Activated B cell treated with CpG ODN at 0.5 μM for 24 hours (primary cell): ENCODE measurements at regions of chr19 and their contacts with region 1.

Region 1: GRCh38 chr19:11987405-11988281 is 22.8 kb downstream of the ZNF763 start:
- DNase-seq: peak; percentile 85
- ATAC-seq: peak; percentile 96
- H3K4me3 Mint-ChIP-seq: peak overlapping the region; percentile 99
- H3K27ac Mint-ChIP-seq: peak overlapping the region; percentile 97
- H3K4me1 Mint-ChIP-seq: peaks cover 31% of the 10 kb centered on the region
- H3K27me3 Mint-ChIP-seq: no peaks in the 10 kb centered on the region
- CTCF ChIP-seq: no peak

Region 2: GRCh38 chr19:11798391-11799330 is 189.0 kb before region 1 on chr19 and contains the start of gene ZNF491:
- CTCF ChIA-PET with region 1: interaction called, 26 read pairs
- POLR2A ChIA-PET with region 1: interaction called, 14 read pairs
- intact Hi-C with region 1: loop called (anchors 1 kb)
- DNase-seq: peak; percentile 77
- ATAC-seq: peak; percentile 99
- H3K4me3 Mint-ChIP-seq: peak within 1 kb of the TSS; percentile 91
- H3K27ac Mint-ChIP-seq: peak within 1 kb of the TSS; percentile 71
- H3K4me1 Mint-ChIP-seq: peaks cover 25% of the 10 kb centered on the region
- H3K27me3 Mint-ChIP-seq: no peaks in the 10 kb centered on the region
- CTCF ChIP-seq: no peak
- total RNA-seq, gene ZNF491: 1.4 and 1.7 TPM in 2 replicates

Region 3: DNA sequence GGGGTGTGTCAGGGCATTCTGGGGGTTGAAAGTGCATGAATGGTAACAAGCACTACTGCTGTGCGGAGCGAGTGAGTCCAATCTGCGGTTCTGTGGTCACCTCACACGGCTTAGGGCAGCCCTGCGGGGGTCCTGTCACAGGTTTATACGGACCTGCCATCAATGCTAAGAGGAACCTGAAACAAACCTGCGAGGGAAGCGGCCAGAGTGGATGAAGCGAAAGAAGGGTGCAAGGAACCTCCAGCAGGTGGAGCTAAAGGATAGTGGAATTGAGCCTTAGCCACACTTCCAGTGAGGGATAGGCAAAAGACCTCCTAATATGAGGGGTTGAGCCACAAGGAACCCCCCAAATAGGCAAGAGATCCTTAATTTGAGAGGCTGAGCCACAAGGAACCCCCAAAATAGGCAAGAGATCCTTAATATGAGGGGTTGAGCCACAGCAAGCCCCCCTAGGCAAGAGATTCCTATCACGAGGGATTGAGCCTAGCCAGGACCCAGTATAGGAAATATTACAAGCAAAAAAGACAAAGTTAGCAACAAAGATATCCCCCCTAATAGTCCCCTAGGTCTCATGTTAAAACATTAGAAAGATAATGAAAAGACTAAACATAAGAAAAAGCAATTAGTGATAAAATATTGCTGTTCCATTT is 106.4 kb before region 1 on chr19:
- CTCF ChIA-PET with region 1: interaction called, 3 read pairs
- POLR2A ChIA-PET with region 1: no interaction called
- intact Hi-C with region 1: loop called (anchors 1 kb)
- DNase-seq: peak; percentile 27
- ATAC-seq: peak; percentile 82
- H3K4me3 Mint-ChIP-seq: no peak overlapping the region
- H3K27ac Mint-ChIP-seq: no peak overlapping the region
- H3K4me1 Mint-ChIP-seq: peaks cover 2% of the 10 kb centered on the region
- H3K27me3 Mint-ChIP-seq: no peaks in the 10 kb centered on the region
- CTCF ChIP-seq: no peak

Region 4: GRCh38 chr19:11971041-11971440 is 16.6 kb before region 1 on chr19:
- CTCF ChIA-PET with region 1: interaction called, 14 read pairs
- POLR2A ChIA-PET with region 1: interaction called, 8 read pairs
- intact Hi-C with region 1: no loop called
- DNase-seq: no peak
- ATAC-seq: no peak
- H3K4me3 Mint-ChIP-seq: no peak overlapping the region
- H3K27ac Mint-ChIP-seq: no peak overlapping the region
- H3K4me1 Mint-ChIP-seq: peaks cover 4% of the 10 kb centered on the region
- H3K27me3 Mint-ChIP-seq: no peaks in the 10 kb centered on the region
- CTCF ChIP-seq: no peak

Region 5: DNA sequence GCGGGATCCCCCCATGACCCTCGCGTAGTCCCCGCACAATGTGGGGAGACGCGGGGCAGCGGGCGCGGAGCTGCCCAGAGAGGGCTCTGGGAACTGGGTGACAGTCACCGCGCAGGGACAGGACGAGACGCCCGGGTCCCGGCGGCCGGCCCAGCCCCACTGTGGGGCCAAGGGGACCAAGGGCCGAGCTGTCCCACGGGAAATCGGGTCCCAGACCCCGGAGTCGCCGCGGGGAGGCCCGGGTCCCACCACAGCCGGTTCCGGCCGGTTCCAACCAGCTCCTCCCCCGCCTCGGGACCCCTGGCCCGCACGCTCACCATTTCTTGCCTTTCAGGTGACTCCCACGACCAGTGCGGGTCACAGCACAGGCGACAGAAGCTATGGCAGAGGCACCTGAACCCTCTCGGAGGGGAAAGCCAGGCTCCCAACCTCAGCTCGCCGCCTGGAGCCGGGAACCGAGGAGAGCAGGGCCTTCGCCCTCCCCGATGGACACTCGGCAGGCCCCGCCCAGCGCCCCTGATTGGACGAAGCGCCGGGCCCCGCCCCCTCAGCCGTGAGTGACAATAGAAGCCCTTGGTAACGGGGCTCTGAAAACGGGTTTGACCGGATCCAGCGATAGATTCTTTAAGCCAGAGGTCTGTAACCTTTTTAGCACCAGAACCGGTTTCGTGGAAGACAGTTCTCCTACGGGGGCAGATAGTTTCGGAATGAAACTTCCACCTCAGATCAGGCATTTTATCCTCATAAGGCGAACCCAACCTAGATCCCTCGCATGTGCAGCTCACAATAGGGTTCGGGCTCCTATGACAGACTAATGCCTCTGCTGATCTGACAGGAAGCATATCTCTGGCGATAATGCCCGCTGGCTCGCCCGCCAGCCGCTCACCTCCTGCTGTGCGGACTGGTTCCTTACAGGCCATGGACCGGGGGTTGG is 47.8 kb after region 1 on chr19 and contains the start of gene ZNF433:
- CTCF ChIA-PET with region 1: no interaction called
- POLR2A ChIA-PET with region 1: interaction called, 6 read pairs
- intact Hi-C with region 1: loop called (anchors 5 kb)
- DNase-seq: peak; percentile 80
- ATAC-seq: peak; percentile 98
- H3K4me3 Mint-ChIP-seq: peak within 1 kb of the TSS; percentile 92
- H3K27ac Mint-ChIP-seq: peak within 1 kb of the TSS; percentile 74
- H3K4me1 Mint-ChIP-seq: peaks cover 20% of the 10 kb centered on the region
- H3K27me3 Mint-ChIP-seq: no peaks in the 10 kb centered on the region
- CTCF ChIP-seq: no peak
- total RNA-seq, gene ZNF433: 6.9 and 8.6 TPM in 2 replicates

Region 6: GRCh38 chr19:12064590-12065538 is 77.2 kb after region 1 on chr19 and contains the start of gene ZNF844:
- CTCF ChIA-PET with region 1: interaction called, 5 read pairs
- POLR2A ChIA-PET with region 1: interaction called, 12 read pairs
- intact Hi-C with region 1: no loop called
- DNase-seq: peak; percentile 81
- ATAC-seq: peak; percentile 95
- H3K4me3 Mint-ChIP-seq: peak within 1 kb of the TSS; percentile 92
- H3K27ac Mint-ChIP-seq: peak within 1 kb of the TSS; percentile 93
- H3K4me1 Mint-ChIP-seq: peaks cover 14% of the 10 kb centered on the region
- H3K27me3 Mint-ChIP-seq: no peaks in the 10 kb centered on the region
- CTCF ChIP-seq: no peak
- total RNA-seq, gene ZNF844: 24.8 and 27.7 TPM in 2 replicates

Region 7: DNA sequence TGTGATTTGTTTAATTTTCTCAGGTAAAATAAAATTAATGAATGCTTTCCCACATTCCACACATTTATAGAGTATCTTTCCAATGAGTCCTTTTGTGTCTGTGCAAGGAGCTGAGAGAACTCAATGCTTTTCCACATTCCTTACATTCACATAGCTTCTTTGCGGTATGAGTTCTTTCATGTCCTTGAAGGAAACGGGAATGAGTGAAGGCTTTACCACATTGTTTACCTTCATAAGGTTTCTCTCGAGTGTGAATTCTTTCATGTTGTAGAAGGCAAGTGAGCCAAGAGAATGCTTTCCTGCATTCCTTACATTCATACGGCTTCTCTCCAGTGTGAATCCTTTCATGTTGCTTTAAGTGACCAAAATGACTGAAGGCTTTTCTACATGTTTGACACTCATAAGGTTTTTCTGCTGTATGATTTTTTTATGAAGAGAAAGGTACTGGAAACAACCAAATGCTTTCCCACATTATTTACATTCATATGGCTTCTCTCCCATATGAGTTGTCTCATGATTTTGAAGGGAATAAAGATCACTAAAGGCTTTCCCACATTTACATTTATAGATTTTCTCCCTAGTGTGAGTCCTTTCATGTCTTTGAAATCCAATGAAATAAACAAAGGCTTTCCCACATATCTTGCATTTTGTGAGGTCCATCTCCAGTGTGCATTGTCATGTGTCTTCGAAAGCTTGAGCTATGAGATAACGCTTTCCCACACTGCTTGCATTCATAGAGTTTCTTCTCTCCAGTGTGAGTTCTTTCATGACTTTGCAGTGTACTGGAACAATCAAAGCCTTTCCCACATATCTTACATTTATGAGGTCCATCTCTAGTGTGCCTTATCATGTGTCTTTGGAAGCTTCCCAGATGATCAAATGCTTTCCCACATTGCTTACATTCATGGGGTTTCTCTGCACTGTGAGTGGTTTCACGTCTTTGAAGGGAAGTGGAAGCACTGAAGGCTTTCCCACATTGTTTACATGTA is 392.4 kb after region 1 on chr19:
- CTCF ChIA-PET with region 1: no interaction called
- POLR2A ChIA-PET with region 1: no interaction called
- intact Hi-C with region 1: no loop called
- DNase-seq: no peak
- ATAC-seq: no peak
- H3K4me3 Mint-ChIP-seq: no peak overlapping the region
- H3K27ac Mint-ChIP-seq: no peak overlapping the region
- H3K4me1 Mint-ChIP-seq: peaks cover 9% of the 10 kb centered on the region
- H3K27me3 Mint-ChIP-seq: no peaks in the 10 kb centered on the region
- CTCF ChIP-seq: no peak

Region 8: GRCh38 chr19:12551060-12551832 is 563.6 kb after region 1 on chr19 and contains the start of gene ZNF564:
- CTCF ChIA-PET with region 1: no interaction called
- POLR2A ChIA-PET with region 1: no interaction called
- intact Hi-C with region 1: loop called (anchors 10 kb)
- DNase-seq: peak; percentile 81
- ATAC-seq: peak; percentile 98
- H3K4me3 Mint-ChIP-seq: peak within 1 kb of the TSS; percentile 98
- H3K27ac Mint-ChIP-seq: peak within 1 kb of the TSS; percentile 94
- H3K4me1 Mint-ChIP-seq: peaks cover 48% of the 10 kb centered on the region
- H3K27me3 Mint-ChIP-seq: no peaks in the 10 kb centered on the region
- CTCF ChIP-seq: no peak
- total RNA-seq, gene ZNF564: 23.0 and 26.6 TPM in 2 replicates